ENCODE measurements at regions of chr13 and their contacts with region 1.

Region 1: DNA sequence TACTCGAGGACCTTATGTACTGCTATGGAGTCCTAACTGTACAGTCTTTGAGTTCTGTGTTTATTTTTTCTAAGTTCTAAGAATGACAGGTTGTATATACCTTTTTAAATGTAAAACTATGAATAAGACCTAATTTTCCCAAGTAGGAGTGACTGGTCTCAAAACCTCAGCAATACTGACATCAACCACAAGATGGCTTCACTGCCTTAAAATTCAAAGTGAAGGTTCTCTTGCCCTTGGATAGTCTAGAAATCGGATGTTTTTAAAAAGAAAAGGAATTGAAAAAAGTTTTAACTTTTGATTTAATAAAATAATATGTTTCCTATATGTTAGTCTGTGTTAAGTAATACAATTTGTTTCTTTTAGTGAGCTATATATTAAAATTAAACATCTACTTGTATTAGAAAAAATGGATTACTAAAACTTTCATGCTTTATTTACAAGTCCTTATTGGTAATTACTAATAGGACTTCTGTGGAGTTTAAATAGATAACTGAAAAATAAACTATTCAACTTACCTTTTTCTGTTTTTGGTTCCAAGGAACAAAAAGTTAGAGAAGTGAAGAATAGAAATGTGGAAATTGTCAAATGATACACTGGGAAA is 52.0 kb downstream of the TDRD3 start:
- DNase-seq: no peak
- ATAC-seq: peak; percentile 73
- H3K4me3 ChIP-seq: no peak overlapping the region
- H3K27ac ChIP-seq: no peak overlapping the region
- H3K4me1 ChIP-seq: no peaks in the 10 kb centered on the region
- H3K27me3 ChIP-seq: no peaks in the 10 kb centered on the region

Region 2: GRCh38 chr13:60392131-60392530 is 56.9 kb before region 1 on chr13:
- intact Hi-C with region 1: no loop called
- DNase-seq: no peak
- ATAC-seq: no peak
- H3K4me3 ChIP-seq: no peak overlapping the region
- H3K27ac ChIP-seq: no peak overlapping the region
- H3K4me1 ChIP-seq: no peaks in the 10 kb centered on the region
- H3K27me3 ChIP-seq: no peaks in the 10 kb centered on the region

Region 3: DNA sequence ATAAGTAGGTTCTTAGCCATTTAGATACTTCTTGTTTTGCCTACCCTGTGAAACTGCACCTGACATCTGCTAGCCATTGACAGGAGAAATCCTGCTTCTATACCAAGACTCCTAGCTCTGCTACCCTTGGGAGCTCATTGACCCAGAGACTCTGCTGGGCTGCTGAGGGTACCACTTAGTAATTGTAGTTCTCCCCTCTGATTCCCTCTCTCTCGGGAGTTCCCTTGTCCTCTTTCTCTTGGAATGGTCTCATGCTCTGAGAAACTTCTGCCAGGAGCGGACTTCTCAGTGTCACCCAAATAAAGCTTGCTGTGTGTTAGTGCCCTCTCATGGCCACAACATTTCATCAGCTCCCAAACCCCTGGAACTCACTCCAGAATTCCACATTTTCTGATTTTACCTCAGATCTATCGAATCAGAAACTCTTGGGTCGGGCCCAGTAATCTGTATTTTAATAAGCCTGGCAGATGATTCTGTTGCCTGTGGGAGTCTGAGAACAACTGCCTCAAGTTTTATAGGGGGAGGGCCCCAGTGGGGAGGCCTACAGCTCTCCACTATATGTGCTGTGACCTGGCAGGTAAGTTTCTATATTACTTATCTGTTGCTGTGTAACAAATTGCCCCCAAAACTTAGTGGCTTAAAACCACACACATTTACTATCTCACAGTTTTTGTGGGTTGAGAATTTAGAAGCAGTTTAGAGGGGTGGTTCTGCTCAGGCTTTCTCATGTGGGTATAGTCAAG is 169.2 kb after region 1 on chr13:
- intact Hi-C with region 1: loop called in 1 of 2 experiments (anchors 10 kb)
- DNase-seq: no peak
- ATAC-seq: peak; percentile 55
- H3K4me3 ChIP-seq: no peak overlapping the region
- H3K27ac ChIP-seq: no peak overlapping the region
- H3K4me1 ChIP-seq: no peaks in the 10 kb centered on the region
- H3K27me3 ChIP-seq: peaks cover 0 to 2% of the 10 kb centered on the region in 2 donors

Region 4: GRCh38 chr13:60671386-60671785 is 222.4 kb after region 1 on chr13:
- intact Hi-C with region 1: no loop called
- DNase-seq: no peak
- ATAC-seq: no peak
- H3K4me3 ChIP-seq: no peak overlapping the region
- H3K27ac ChIP-seq: no peak overlapping the region
- H3K4me1 ChIP-seq: no peaks in the 10 kb centered on the region
- H3K27me3 ChIP-seq: no peaks in the 10 kb centered on the region